ENCODE measurements at regions of chr7 and their contacts with region 1.

Region 1: GRCh38 chr7:18320971-18321567 is 174.5 kb upstream of the HDAC9 start:
- DNase-seq: peak in 4 of 5 donors; percentile 3 to 14 (median 8)
- H3K4me3 ChIP-seq: no peak overlapping the region
- H3K4me3 Mint-ChIP-seq: no peak overlapping the region
- H3K27ac ChIP-seq: no peak overlapping the region
- H3K27ac Mint-ChIP-seq: no peak overlapping the region
- H3K4me1 ChIP-seq: no peaks in the 10 kb centered on the region
- H3K4me1 Mint-ChIP-seq: peaks cover 0 to 4% (median under 1%) of the 10 kb centered on the region in 4 donors
- H3K27me3 ChIP-seq: no peaks in the 10 kb centered on the region
- H3K27me3 Mint-ChIP-seq: peaks cover 2 to 4% of the 10 kb centered on the region in 2 donors

Region 2: DNA sequence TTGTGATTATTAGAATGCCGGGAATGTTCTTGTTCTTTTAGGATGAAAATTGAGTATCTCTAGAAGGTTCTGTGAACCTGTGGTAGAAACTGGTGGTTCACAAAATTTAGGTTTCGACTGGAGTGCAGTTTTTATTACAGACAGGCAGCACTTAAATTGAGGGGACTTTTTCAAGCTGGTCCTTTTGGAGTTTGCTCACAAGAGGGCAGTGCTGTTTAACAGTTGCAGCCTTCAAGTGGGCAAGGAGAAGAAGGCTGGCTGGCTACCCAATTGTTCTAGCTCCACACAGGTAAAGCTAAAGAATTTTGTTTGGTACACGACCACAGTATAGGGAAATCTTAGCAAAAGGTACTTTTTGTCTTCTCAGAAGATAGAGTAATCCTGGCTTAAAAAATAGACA is 614.3 kb before region 1 on chr7:
- CTCF ChIA-PET with region 1: no interaction called
- POLR2A ChIA-PET with region 1: no interaction called
- intact Hi-C with region 1: loop called (anchors 2 kb)
- DNase-seq: peak in 4 of 5 donors; percentile 10 to 24 (median 18)
- H3K4me3 ChIP-seq: no peak overlapping the region
- H3K4me3 Mint-ChIP-seq: no peak overlapping the region
- H3K27ac ChIP-seq: no peak overlapping the region
- H3K27ac Mint-ChIP-seq: no peak overlapping the region
- H3K4me1 ChIP-seq: no peaks in the 10 kb centered on the region
- H3K4me1 Mint-ChIP-seq: no peaks in the 10 kb centered on the region
- H3K27me3 ChIP-seq: no peaks in the 10 kb centered on the region
- H3K27me3 Mint-ChIP-seq: peaks cover under 1 to 4% of the 10 kb centered on the region in 2 donors